AG04450 (cell line): ENCODE measurements at regions of chr20 and their contacts with region 1.

Region 1: DNA sequence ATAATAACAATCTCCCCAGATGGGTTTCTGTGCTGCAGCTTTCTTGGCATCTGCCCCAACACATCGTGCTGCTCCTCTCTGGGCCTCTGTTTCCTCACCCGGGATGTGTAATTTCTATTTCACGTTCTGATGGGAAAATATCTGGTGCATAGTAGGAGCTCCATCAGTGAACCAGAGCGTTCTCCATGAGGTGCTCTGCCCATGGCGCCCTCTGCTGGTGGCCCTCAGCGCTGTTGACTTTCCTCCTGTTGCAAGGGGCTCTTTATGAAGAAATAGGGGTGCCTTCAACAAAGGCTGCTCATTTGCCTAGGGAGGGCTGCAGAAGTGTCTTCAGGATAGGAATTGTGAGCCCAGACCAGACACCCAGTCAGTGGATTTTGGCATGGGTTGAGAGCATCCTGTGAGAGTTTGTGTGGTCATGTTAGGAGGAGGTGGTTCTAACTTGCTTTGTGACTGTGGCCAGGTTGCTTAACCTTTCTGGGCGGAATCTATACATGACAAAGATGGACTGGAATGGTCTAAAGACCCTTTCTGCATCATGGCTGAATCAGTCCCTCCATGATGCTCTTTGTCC is 8.1 kb downstream of the SCRT2 start:
- DNase-seq: no peak
- H3K4me3 ChIP-seq: no peak overlapping the region
- H3K27ac ChIP-seq: no peak overlapping the region
- H3K27me3 ChIP-seq: peaks cover 66% of the 10 kb centered on the region
- CTCF ChIP-seq: peak; percentile 88

Region 2: DNA sequence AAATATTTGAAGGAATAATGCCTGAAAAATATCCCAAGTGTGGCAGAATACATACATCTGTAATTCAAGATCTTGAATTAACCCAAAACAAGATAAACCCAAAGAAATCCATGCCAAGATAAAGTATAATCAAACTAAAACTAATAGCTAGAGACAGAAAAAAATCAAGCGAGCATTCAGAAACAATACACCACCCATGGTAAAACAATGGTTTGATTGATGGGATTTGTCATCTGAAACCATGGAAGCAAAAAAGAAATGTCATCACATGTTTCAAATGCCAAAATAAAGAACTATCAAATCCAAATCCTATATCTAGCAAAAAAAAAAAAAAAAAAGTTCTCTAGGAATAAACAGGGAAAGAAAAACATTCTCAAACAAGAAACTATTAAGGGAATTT is 515.3 kb before region 1 on chr20:
- CTCF ChIA-PET with region 1: no interaction called
- POLR2A ChIA-PET with region 1: no interaction called
- DNase-seq: no peak
- H3K4me3 ChIP-seq: no peak overlapping the region
- H3K27ac ChIP-seq: no peak overlapping the region
- H3K27me3 ChIP-seq: peaks cover 2% of the 10 kb centered on the region
- CTCF ChIP-seq: no peak

Region 3: GRCh38 chr20:653590-654416 is 13.7 kb before region 1 on chr20:
- CTCF ChIA-PET with region 1: interaction called, 11 read pairs
- POLR2A ChIA-PET with region 1: interaction called, 3 read pairs
- DNase-seq: no peak
- H3K4me3 ChIP-seq: peak overlapping the region; percentile 60
- H3K27ac ChIP-seq: peak overlapping the region; percentile 57
- H3K27me3 ChIP-seq: peaks cover 2% of the 10 kb centered on the region
- CTCF ChIP-seq: no peak